ENCODE measurements at regions of chr5 and their contacts with region 1.

Region 1: GRCh38 chr5:36305571-36306326 is 4.0 kb upstream of the RANBP3L start:
- DNase-seq: peak; percentile 27 to 66
- ATAC-seq: peak; percentile 78 to 92 (median 83)
- H3K4me3 ChIP-seq: no peak overlapping the region
- H3K27ac ChIP-seq: no peak overlapping the region
- H3K4me1 ChIP-seq: peaks cover 21% of the 10 kb centered on the region
- H3K27me3 ChIP-seq: no peaks in the 10 kb centered on the region
- CTCF ChIP-seq: peak; percentile 70

Region 2: GRCh38 chr5:36079200-36079761 is 226.5 kb before region 1 on chr5:
- intact Hi-C with region 1: loop called in 1 of 2 experiments (anchors 10 kb)
- DNase-seq: no peak
- ATAC-seq: peak in 3 of 4 donors; percentile 13 to 54 (median 49)
- H3K4me3 ChIP-seq: no peak overlapping the region
- H3K27ac ChIP-seq: no peak overlapping the region
- H3K4me1 ChIP-seq: no peaks in the 10 kb centered on the region
- H3K27me3 ChIP-seq: no peaks in the 10 kb centered on the region
- CTCF ChIP-seq: peak; percentile 50

Region 3: DNA sequence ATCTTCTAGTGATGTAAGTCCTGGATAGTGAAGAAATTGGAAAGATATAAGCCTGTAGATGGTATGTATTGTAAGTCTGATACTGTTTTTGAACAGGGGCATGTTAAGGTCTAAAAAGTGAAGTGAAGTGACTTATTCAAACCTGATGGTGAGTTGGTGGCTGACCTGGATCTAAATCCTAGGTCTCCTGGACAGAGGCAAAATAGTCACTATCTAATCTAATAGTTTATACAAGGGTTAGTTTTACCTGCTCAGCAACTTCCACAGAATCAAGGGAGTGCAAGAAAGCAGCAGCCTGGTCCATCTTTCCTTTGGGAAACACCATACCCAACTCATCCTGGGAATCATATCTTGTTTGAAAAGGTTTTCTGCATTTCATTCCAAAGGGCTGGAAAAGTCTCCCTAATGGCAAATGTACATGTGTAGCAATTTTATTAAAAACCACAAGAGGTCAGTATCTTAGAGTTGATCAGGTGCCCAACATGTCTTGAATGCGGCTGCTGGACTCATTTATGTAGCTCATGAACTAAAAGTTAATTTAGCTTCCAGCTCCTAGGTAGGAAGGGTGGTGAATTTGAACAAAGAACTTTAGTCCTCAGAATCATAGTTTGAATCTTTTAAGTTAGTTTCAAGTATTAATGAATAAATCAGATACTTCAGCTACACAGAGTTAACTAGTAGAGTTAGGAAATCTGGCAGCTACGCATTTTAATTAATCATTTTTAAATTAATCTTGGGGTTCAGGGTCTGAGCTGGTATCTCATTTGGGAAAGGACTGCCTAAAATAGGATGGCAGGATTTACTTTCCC is 127.8 kb before region 1 on chr5:
- intact Hi-C with region 1: loop called in 1 of 2 experiments (anchors 5 kb)
- DNase-seq: no peak
- ATAC-seq: peak in 2 of 4 donors; percentile 50 to 79
- H3K4me3 ChIP-seq: no peak overlapping the region
- H3K27ac ChIP-seq: no peak overlapping the region
- H3K4me1 ChIP-seq: no peaks in the 10 kb centered on the region
- H3K27me3 ChIP-seq: no peaks in the 10 kb centered on the region
- CTCF ChIP-seq: peak; percentile 53

Region 4: DNA sequence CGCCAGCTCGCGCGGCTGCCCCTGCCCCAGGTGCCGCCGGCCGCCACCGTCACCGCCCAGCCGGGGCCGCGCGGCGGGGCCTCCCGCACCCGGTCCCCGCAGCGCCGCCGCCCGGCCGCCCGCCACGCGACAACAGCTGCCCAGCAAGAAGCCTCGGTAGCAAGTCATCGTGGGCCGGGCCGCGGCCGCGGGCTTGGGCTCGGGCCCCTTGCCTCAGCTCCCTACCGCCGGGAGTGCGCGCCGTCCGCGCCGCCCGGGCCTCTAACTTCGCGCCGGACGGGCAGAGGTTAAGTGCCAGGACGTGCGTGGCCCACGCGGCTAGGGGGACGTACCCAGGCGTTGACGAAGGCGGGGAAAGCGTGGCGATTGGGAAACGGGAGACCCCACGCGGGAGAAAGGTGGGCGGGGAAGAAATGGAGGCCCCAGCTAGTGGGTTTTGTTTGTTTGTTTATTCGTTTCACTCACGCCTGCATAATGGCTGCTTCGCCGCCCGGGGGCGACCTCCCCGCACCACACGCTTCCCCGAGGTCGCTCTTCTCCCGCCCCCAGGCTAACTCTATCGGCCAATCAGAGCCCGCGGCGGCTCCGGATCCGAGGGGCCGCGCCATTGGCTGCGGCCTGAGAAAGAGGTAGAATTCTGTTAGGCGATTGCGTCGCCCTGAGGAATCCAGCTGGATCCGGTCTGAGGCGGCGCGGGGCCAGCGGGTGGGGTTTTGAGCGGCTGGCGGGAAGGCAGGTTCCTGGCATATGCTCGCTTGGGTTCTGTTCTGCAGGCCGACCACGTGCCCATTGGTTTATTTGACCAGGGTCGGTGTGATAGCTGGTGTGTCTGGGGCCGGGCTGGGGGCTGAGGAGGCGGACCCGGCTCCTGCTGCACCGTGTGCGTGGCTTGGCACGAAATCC is 63.9 kb before region 1 on chr5 and contains the start of gene NADK2:
- intact Hi-C with region 1: loop called in 1 of 2 experiments (anchors 5 kb)
- DNase-seq: peak; percentile 95 to 97
- ATAC-seq: peak; percentile 94 to 95 (median 94)
- H3K4me3 ChIP-seq: peak within 1 kb of the TSS; percentile 91
- H3K27ac ChIP-seq: peak within 1 kb of the TSS; percentile 96
- H3K4me1 ChIP-seq: peaks cover 40% of the 10 kb centered on the region
- H3K27me3 ChIP-seq: no peaks in the 10 kb centered on the region
- CTCF ChIP-seq: peak; percentile 69
- total RNA-seq, gene NADK2: 30.8 to 46.6 (median 35.2) TPM

Region 5: DNA sequence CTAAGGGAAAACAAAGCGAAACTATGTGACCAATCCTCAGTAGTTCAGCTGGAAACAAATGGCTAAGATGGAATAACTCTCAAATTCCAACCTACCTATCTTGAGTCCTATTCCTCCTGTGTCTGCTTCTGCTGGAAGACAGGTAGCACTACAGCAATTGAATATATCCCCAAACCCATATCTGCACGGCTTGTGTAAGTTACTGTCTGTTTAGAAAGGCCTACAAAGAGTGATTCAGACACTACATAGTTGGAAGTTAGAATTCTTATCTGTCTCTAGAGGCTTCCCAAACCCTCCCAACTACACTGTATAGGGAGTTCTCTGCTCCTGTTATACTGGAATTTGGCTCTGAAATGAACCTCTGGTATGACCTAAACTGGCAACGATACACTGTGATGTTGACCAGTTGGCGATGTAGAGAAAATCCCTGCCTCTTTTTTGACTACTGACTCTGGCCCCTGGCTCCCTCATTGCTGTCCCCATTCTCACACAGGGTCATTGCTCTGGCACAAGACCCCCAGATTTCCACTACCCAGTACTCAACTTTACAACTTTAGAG is 41.5 kb before region 1 on chr5:
- intact Hi-C with region 1: loop called (anchors 1 to 5 kb)
- DNase-seq: no peak
- ATAC-seq: no peak
- H3K4me3 ChIP-seq: no peak overlapping the region
- H3K27ac ChIP-seq: no peak overlapping the region
- H3K4me1 ChIP-seq: no peaks in the 10 kb centered on the region
- H3K27me3 ChIP-seq: no peaks in the 10 kb centered on the region
- CTCF ChIP-seq: no peak

Region 6: GRCh38 chr5:36269479-36270219 is 36.1 kb before region 1 on chr5:
- intact Hi-C with region 1: loop called (anchors 1 to 5 kb)
- DNase-seq: no peak
- ATAC-seq: no peak
- H3K4me3 ChIP-seq: no peak overlapping the region
- H3K27ac ChIP-seq: no peak overlapping the region
- H3K4me1 ChIP-seq: peaks cover 3% of the 10 kb centered on the region
- H3K27me3 ChIP-seq: no peaks in the 10 kb centered on the region
- CTCF ChIP-seq: no peak

Measured in psoas muscle (tissue), 8 donors.